ENCODE measurements at regions of chr3 and their contacts with region 1.

Region 1: DNA sequence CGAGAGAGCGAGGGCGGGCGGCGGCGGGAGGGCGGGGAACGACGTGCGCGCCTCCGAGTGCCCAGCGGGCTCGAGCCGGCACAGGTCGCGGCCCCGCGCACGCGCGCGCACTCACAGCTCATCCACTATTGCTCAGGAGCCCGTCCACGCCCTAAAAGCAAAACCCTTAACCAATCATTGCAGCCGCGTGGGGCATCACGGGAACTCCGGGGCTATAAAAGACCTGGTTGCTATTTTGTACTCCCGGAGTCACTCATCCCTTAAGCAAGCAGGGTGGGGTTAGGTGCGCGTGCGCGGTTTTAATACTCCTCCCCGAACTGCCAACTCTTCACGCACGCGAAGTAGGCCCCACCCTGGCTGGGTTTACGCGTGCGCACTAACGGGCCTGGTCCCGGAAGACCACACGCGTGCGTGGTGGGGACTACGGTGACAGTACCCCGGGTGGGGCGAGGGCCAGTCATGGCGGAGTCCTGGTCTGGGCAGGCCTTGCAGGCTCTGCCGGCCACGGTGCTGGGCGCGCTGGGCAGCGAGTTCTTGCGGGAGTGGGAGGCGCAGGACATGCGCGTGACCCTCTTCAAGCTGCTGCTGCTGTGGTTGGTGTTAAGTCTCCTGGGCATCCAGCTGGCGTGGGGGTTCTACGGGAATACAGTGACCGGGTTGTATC is at the starts of genes RHOA and TCTA:
- DNase-seq: peak; percentile 99 to 100
- H3K4me3 ChIP-seq: peak within 1 kb of the TSS; percentile 57 to 87
- H3K27ac ChIP-seq: peak within 1 kb of the TSS; percentile 97 to 98
- H3K4me1 ChIP-seq: peaks cover 0 to 13% of the 10 kb centered on the region in 2 donors
- H3K27me3 ChIP-seq: no peaks in the 10 kb centered on the region
- CTCF ChIP-seq: peak in 1 of 4 experiments; percentile 22
- POLR2A ChIP-seq: peak; percentile 91 to 92
- total RNA-seq, gene RHOA: 282 to 493 (median 419) TPM
- total RNA-seq, gene TCTA: 2.1 to 26.0 (median 18.7) TPM

Region 2: GRCh38 chr3:49358217-49358883 is 53.8 kb before region 1 on chr3 and contains the start of gene GPX1:
- intact Hi-C with region 1: loop called (anchors 5 kb)
- DNase-seq: peak; percentile 94 to 95
- H3K4me3 ChIP-seq: peak within 1 kb of the TSS; percentile 86 to 87
- H3K27ac ChIP-seq: peak within 1 kb of the TSS; percentile 81 to 92
- H3K4me1 ChIP-seq: peaks cover 0 to 10% of the 10 kb centered on the region in 2 donors
- H3K27me3 ChIP-seq: no peaks in the 10 kb centered on the region
- CTCF ChIP-seq: no peak
- POLR2A ChIP-seq: peak; percentile 95 to 97
- total RNA-seq, gene GPX1: 40.2 to 450 (median 81.2) TPM